ENCODE measurements at regions of chr18 and their contacts with region 1.

Region 1: GRCh38 chr18:36628435-36629137 is 200.2 kb downstream of the TPGS2 start:
- DNase-seq: no peak
- ATAC-seq: no peak
- H3K4me3 ChIP-seq: no peak overlapping the region
- H3K27ac ChIP-seq: no peak overlapping the region
- H3K4me1 ChIP-seq: no peaks in the 10 kb centered on the region
- H3K27me3 ChIP-seq: no peaks in the 10 kb centered on the region
- CTCF ChIP-seq: no peak

Region 2: GRCh38 chr18:36067055-36067957 is 561.3 kb before region 1 on chr18 and contains the start of gene RPRD1A:
- CTCF ChIA-PET with region 1: no interaction called
- POLR2A ChIA-PET with region 1: interaction called, 16 read pairs
- intact Hi-C with region 1: no loop called
- DNase-seq: peak; percentile 75
- ATAC-seq: peak; percentile 88
- H3K4me3 ChIP-seq: peak within 1 kb of the TSS; percentile 90
- H3K27ac ChIP-seq: peak within 1 kb of the TSS; percentile 81
- H3K4me1 ChIP-seq: no peaks in the 10 kb centered on the region; the same call in 1 of the 2 replicates
- H3K27me3 ChIP-seq: no peaks in the 10 kb centered on the region
- CTCF ChIP-seq: no peak
- total RNA-seq, gene RPRD1A: 42.2 and 46.0 TPM in 2 replicates

Region 3: DNA sequence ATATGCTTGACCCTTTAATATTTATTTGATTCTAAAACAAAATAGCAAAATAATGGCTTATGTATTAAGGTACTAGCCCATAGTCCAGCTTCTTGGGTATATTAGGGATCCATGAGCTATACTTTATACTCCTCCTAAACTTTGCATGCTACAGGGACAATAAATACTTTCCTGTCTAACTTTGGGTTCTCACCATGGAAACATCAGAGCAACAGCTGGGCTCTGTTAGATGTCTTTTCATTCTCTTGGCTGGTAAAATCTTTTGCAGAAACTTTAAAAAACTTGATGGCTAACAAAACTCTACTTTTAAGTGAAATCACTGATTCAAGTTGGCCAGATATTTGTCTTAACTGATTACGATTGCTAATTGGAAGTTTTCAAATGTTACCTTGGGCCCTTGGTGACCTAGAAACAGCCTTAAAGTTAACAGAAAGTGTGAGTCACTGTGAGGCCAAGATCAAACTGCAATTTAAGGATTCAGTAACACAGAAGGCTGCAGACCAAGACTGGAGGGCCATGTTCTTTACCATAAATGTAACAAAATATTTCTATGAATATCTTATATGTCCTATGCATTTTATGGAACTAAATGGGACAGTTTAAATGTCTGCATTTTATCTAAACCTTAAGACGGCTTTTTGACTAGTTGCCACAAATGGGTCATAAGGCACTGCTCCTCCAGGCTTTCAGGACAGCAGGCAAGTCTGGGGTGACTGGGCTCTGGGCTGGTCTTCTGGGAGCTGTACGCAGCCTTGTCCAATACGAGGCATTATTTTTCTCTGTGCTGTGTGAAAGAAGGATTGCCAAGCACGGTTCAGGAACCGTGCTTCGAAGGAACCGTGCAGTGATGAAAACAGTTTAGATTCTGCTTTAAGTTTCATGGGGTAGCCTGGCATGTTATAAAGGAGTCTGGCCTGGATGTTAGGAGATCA is 11.7 kb after region 1 on chr18:
- CTCF ChIA-PET with region 1: no interaction called
- POLR2A ChIA-PET with region 1: no interaction called
- intact Hi-C with region 1: no loop called
- DNase-seq: no peak
- ATAC-seq: no peak
- H3K4me3 ChIP-seq: no peak overlapping the region
- H3K27ac ChIP-seq: no peak overlapping the region
- H3K4me1 ChIP-seq: no peaks in the 10 kb centered on the region
- H3K27me3 ChIP-seq: no peaks in the 10 kb centered on the region
- CTCF ChIP-seq: no peak